ENCODE measurements at regions of chr1 and their contacts with region 1.

Region 1: GRCh38 chr1:192158181-192158580 is at the start of gene RGS18:
- H3K4me3 Mint-ChIP-seq: peak within 1 kb of the TSS; percentile 73
- H3K27ac Mint-ChIP-seq: peak within 1 kb of the TSS; percentile 97
- H3K4me1 Mint-ChIP-seq: peaks cover 31% of the 10 kb centered on the region
- H3K27me3 Mint-ChIP-seq: no peaks in the 10 kb centered on the region

Region 2: GRCh38 chr1:192066202-192066601 is 92.0 kb before region 1 on chr1:
- intact Hi-C with region 1: no loop called
- H3K4me3 Mint-ChIP-seq: no peak overlapping the region
- H3K27ac Mint-ChIP-seq: no peak overlapping the region
- H3K4me1 Mint-ChIP-seq: peaks cover 19% of the 10 kb centered on the region
- H3K27me3 Mint-ChIP-seq: no peaks in the 10 kb centered on the region

Region 3: DNA sequence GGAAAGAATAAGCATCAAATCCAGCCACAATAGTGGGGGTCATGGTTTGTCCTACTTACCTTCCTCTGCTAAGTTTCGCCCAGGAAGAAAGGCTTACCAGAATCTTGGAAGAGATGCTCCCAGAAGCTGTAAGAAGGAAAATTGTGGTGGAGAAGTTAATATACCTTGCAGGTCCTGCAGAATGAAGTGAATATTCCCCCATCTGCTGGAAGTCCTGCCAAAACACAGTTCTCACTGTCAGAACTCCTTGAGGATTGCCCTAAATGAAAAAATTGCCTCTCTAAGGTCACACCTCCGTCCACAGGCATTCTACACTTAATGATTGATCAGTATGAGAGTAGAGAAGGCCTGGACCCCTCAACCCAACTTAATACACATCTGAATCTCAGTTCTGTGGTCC is 80.2 kb after region 1 on chr1:
- intact Hi-C with region 1: no loop called
- H3K4me3 Mint-ChIP-seq: no peak overlapping the region
- H3K27ac Mint-ChIP-seq: no peak overlapping the region
- H3K4me1 Mint-ChIP-seq: no peaks in the 10 kb centered on the region
- H3K27me3 Mint-ChIP-seq: no peaks in the 10 kb centered on the region

Region 4: DNA sequence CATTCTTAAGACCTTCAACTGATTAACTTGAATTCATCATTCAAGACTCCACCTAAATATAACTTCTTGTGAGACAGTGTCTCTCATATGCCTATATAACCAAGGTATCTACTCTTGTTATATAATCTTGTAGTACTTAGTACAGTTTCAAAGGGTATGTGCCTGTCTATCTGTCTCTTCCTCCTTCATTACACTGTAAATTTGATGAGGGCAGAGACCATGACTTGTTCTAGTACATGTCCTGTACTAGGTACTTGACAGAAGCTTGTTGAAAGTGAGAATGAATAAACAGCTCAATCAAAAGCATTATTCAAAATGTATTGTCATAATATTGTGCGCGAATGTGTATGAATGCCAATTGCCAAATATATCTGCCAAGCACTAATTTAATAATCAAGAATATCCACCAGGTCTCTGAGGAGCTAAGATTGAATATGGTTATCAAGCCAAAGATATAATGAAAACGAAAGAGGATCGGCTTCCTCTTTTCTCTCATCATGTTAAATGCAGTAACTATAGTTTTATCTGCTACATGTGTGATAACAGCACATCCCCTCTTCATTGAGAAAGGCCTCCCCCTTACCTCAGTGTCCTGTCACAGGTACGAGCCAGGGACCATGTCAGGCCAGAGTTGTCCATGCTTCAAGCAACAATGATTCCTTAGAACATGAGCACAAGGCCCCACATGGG is 783.7 kb after region 1 on chr1:
- intact Hi-C with region 1: loop called (anchors 10 kb)
- H3K4me3 Mint-ChIP-seq: no peak overlapping the region
- H3K27ac Mint-ChIP-seq: peak overlapping the region; percentile 75
- H3K4me1 Mint-ChIP-seq: peaks cover 52% of the 10 kb centered on the region
- H3K27me3 Mint-ChIP-seq: no peaks in the 10 kb centered on the region

Measured in dendritic cell treated with granulocyte-macrophage colony-stimulating factor and Interleukin-4, amounts not matched to agents 40 ng/mL and 50 ng/mL, for 4 days (primary cell).